Upper lobe of right lung (tissue), 1 donor: ENCODE measurements at regions of chr10 and their contacts with region 1.

Region 1: DNA sequence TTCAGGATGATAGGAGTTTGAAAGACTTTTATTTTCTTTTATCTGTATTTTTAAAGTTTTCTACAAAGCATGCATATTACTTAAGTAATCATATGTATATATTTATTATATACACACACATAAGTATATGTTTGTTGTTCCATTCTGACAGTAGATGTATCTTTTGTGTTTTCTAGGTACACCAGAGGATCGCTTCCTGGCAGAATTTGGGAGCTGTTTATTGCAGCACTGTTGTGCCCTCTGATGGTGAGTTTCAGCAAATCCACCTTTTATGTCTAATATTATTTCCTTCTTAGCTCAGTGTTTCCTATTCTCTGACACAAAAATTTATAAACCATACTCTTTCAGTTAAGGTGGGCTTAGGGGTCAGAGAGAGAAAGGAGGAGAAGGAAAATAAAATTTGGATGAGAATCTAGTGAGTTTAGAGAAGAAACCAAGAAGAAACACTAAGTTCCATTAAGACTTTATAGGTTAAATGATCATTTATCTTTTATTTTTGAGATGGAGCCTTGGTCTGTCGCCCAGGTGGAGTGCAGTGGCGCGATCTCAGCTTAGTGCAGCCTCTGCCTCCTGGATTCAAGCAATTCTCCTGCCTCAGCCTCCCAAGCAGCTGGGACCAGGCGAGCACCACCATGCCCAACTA is 59.2 kb upstream of the OIT3 start:
- DNase-seq: no peak
- ATAC-seq: peak; percentile 85
- H3K4me3 ChIP-seq: no peak overlapping the region
- H3K27ac ChIP-seq: no peak overlapping the region
- H3K4me1 ChIP-seq: peaks cover 14% of the 10 kb centered on the region
- H3K27me3 ChIP-seq: no peaks in the 10 kb centered on the region
- CTCF ChIP-seq: peak; percentile 62

Region 2: DNA sequence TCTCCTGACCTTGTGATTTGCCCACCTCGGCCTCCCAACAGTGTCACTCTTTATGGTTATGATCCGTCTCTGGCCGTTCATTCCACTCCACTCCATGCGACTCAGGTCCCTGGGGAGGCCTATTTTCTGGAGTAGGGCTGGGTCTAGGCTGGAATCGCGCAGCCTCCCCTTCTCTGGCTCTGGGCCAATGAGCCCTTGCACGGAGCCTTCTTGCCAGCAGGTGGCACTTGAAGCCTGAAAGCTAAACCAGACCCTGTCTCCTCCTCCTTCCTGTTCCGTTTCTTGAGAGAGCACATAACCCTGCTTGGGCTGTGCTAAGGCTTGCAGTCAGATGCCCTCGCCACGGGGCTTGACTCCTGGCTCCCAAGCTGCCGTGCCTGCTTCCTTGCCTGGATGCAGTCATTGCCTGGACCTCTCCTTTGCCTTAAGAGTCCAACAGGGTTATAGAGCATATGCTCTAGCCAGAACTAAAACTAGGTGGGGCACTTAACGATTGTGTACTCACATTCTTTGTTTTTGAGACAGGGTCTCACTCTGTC is 470.0 kb before region 1 on chr10:
- intact Hi-C with region 1: loop called (anchors 10 kb)
- DNase-seq: peak; percentile 89
- ATAC-seq: peak; percentile 98
- H3K4me3 ChIP-seq: peak overlapping the region; percentile 3
- H3K27ac ChIP-seq: peak overlapping the region; percentile 59
- H3K4me1 ChIP-seq: peaks cover 11% of the 10 kb centered on the region
- H3K27me3 ChIP-seq: no peaks in the 10 kb centered on the region
- CTCF ChIP-seq: peak; percentile 93

Region 3: DNA sequence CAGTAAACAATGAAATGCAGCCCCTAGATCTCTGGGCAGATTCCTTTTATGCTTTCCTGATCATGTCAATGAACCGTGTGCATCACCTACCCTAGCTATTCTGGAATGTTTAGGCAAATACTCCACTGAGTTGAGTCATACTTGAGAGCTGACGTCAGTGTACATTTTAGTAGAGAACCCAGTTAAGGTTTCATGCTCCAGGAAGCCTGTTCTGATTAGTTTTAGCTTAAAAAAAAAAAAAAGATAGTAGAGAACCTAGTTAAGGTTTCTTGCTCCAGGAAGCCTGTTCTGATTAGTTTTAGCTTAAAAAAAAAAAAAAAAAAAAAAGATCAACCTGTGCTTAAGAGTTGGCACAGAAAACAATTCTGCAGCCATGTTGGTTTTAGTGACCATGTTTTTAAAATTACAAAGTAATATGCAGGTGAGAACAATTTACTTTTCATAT is 146.1 kb before region 1 on chr10:
- intact Hi-C with region 1: no loop called
- DNase-seq: no peak
- ATAC-seq: peak; percentile 45
- H3K4me3 ChIP-seq: no peak overlapping the region
- H3K27ac ChIP-seq: peak overlapping the region; percentile 63
- H3K4me1 ChIP-seq: peaks cover 16% of the 10 kb centered on the region
- H3K27me3 ChIP-seq: no peaks in the 10 kb centered on the region
- CTCF ChIP-seq: no peak

Region 4: GRCh38 chr10:72729528-72729927 is 104.8 kb before region 1 on chr10:
- intact Hi-C with region 1: no loop called
- DNase-seq: no peak
- ATAC-seq: no peak
- H3K4me3 ChIP-seq: no peak overlapping the region
- H3K27ac ChIP-seq: no peak overlapping the region
- H3K4me1 ChIP-seq: no peaks in the 10 kb centered on the region
- H3K27me3 ChIP-seq: no peaks in the 10 kb centered on the region
- CTCF ChIP-seq: no peak

Region 5: DNA sequence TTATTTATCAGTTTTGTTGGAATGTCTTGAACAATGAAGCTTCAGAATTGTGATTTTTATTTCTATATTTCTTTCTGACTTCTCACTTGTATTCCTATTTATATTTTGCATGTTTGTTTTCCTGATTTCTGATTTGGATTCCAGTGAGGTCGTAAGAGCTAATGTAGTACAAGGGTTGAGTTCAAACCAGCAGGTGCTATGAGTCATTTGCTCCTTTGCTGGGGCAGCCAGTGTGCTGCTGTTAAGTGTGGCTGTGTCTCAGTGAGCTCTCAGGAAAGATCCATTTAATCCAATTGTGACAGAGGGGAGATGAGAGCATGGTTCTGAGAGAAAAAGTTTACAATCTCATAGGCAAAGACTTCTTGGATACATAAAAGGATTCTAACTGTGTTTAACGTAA is 93.8 kb before region 1 on chr10:
- intact Hi-C with region 1: no loop called
- DNase-seq: no peak
- ATAC-seq: peak; percentile 58
- H3K4me3 ChIP-seq: no peak overlapping the region
- H3K27ac ChIP-seq: no peak overlapping the region
- H3K4me1 ChIP-seq: peaks cover 38% of the 10 kb centered on the region
- H3K27me3 ChIP-seq: no peaks in the 10 kb centered on the region
- CTCF ChIP-seq: no peak

Region 6: DNA sequence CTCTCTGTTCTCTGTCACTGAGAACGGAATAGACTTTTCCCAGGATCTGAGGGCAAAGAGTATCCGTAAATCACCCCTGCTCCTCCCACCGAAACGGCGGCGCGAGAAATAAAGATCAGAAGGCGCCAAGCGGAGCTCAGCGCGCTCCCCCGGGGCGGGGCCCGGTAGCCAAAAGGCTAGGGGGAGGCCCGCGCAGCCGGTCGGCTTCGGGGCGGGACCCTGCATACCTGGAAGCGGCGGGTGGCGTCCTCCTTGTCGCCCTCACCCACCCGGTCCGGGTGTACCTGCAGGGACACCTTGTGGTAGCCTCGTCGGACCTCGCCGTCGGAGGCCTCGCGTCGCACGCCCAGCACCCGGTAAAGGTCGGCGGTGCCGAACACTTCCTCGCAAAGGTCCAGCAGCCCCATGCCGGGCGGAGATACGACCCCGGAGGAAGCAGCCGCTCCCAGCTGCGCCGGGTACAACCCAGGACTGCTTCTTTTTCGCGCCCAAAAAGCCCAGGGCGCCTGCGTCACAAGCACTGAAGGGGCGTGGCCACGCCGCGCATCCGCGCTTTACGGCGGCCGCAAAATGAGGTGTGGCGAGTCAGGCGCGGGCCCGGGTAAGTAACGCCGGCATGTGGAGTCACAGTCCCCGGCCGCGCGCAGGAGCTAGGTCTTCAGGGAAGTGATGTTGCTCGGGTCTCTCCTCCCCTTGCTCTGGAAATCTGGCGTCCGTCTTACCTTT is 412.6 kb after region 1 on chr10 and contains the start of gene DNAJC9:
- intact Hi-C with region 1: no loop called
- DNase-seq: peak; percentile 98
- ATAC-seq: peak; percentile 99
- H3K4me3 ChIP-seq: peak within 1 kb of the TSS; percentile 95
- H3K27ac ChIP-seq: peak within 1 kb of the TSS; percentile 88
- H3K4me1 ChIP-seq: peaks cover 32% of the 10 kb centered on the region
- H3K27me3 ChIP-seq: no peaks in the 10 kb centered on the region
- CTCF ChIP-seq: peak; percentile 6
- total RNA-seq, gene DNAJC9: 12.4 TPM